Posterior vena cava (tissue), 2 donors: ENCODE measurements at regions of chr6 and their contacts with region 1.

Region 1: GRCh38 chr6:42177514-42178364 is 4.6 kb downstream of the GUCA1A start:
- DNase-seq: no peak

Region 2: DNA sequence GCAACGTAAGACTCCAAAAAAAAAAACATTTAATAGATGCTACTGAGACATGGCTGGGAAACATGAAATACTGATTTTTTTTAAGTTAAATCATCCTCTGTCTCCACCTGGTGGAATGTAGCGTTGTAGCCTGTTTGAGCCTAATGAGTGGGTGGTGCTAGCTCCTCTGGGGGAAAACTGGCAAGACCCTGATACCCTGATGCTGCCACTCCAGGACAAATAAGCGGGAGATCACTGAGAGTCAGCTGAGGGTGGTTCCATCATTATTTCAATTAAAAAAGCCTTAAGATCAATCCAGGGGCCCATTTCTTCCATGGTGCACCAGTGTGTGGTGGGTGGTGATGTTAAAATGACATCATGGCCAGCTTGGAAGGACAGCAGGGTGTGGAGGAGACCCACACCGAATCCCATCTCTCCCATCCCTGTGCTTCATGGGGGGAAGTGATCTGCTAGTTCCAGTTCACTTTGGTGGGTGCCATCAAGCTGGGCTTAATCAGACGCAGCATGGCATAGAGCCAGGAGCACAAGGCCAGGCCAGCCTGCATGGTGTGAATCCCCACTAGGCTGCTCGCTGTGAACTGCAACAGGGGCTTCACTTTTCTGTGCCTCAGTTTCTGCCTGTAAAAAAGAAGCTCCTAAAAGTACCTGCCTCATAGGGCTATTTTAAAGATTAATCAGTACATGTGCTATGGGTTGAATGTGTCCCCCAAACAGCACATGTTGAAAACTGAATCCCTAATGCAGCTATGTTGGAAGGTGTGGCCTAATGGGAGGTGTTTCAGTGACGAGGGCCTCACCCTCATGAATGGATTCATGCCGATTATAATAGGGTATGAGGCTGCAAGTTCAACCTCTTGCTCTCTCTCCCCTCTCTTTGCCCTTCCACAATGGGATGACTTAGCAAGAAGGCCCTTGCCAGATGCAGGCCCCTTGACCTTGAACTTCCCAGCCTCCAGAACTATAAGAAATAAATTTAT is 52.9 kb after region 1 on chr6:
- intact Hi-C with region 1: loop called in 1 of 2 experiments (anchors 2 kb)
- DNase-seq: no peak